ENCODE measurements at regions of chr3 and their contacts with region 1.

Region 1: DNA sequence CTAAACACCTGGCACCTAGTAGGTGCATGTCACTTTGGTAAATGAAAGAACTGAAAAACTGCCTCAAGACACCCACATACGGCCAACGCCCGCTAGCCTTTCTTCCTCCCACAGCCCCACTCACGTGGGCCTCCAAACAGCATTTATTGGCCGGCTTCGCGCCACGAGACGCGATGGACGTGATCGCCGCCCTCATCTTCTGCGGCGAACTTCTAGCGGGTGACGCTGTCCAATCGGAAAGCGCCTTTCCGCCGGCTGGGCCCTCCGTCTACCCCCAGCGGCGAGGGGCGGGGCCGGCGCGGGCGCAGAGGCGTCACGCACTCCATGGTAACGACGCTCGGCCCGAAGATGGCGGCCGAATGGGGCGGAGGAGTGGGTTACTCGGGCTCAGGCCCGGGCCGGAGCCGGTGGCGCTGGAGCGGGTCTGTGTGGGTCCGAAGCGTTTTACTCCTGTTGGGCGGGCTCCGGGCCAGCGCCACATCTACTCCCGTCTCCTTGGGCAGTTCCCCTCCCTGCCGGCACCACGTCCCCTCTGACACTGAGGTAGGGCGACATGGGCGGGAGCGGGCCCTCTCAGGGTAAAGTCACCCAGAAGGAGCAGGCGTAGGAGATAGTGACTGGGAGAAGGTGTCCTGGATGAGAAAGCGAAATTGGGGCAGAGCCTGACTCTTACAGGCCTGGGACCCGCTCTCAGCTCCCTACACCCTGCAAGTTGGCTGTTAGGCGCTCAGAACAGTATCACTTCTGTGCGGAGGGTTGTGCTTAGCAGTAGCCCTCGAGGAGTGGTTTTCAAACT is at the start of gene LMLN:
- DNase-seq: peak; percentile 94 to 96 (median 95)
- H3K4me3 ChIP-seq: peak within 1 kb of the TSS; percentile 75
- H3K4me3 Mint-ChIP-seq: peak within 1 kb of the TSS; percentile 86 to 96 (median 89)
- H3K27ac ChIP-seq: peak within 1 kb of the TSS; percentile 74
- H3K27ac Mint-ChIP-seq: peak within 1 kb of the TSS; percentile 91 to 98 (median 96)
- H3K4me1 ChIP-seq: peaks cover 41% of the 10 kb centered on the region
- H3K4me1 Mint-ChIP-seq: peaks cover 52 to 64% (median 59%) of the 10 kb centered on the region in 3 donors
- H3K27me3 ChIP-seq: no peaks in the 10 kb centered on the region
- H3K27me3 Mint-ChIP-seq: no peaks in the 10 kb centered on the region
- total RNA-seq, gene LMLN: 7.3 to 7.4 TPM

Region 2: DNA sequence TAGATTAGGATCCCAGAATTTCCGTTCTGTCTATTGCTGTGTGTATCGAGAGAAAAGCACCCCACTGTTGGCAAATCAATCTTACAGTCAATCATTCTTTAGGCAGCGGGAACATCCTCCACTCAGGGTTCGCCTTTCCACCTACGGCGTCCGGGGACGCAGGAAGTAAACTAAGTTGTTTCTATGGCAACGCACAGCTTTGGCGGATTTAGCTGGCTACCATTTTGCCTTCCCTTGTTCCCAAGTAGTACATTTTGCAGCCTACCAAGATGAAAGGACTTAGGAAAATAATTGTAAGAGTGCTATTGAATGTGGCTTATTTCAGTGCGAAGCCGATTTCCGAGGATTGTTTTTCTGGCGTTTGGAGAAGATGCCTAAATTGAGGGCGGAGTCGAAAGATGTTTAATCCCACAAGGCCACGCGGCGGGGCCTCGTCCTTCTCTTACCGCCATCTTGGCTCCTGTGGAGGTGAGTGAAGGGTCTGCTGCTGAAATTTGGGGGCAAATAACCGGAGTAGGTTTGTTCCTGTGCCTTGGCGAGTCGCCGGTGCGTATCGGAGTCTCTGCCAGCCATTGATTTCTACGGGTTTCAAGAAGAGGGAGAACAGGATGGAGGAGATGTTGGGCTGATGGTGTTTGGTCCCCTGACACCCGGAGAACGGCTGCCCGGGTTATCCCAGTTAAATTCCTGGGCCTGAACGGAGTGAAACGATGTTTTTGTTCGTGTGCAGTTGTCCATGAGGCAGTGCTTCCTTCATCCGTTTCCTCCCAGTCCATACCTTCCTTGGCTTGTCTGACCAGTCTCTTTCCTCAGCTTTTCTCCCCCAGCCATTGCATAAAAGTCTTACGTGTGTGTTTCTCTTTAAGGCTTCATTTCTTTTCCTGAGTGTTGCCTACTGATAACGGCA is 10.1 kb before region 1 on chr3 and contains the start of gene RPL35A:
- CTCF ChIA-PET with region 1: interaction called, 4 read pairs
- POLR2A ChIA-PET with region 1: interaction called, 13 read pairs
- DNase-seq: peak; percentile 73 to 93 (median 91)
- H3K4me3 ChIP-seq: peak within 1 kb of the TSS; percentile 100
- H3K4me3 Mint-ChIP-seq: peak within 1 kb of the TSS; percentile 91 to 99 (median 96)
- H3K27ac ChIP-seq: peak within 1 kb of the TSS; percentile 87
- H3K27ac Mint-ChIP-seq: peak within 1 kb of the TSS; percentile 96 to 100 (median 100)
- H3K4me1 ChIP-seq: peaks cover 38% of the 10 kb centered on the region
- H3K4me1 Mint-ChIP-seq: peaks cover 37 to 52% (median 48%) of the 10 kb centered on the region in 3 donors
- H3K27me3 ChIP-seq: no peaks in the 10 kb centered on the region
- H3K27me3 Mint-ChIP-seq: no peaks in the 10 kb centered on the region
- total RNA-seq, gene RPL35A: 1,301 to 1,320 TPM